Heart right ventricle (tissue), 16 donors: ENCODE measurements at regions of chr3 and their contacts with region 1.

Region 1: GRCh38 chr3:171049861-171050444 is 23.4 kb upstream of the SLC2A2 start:
- DNase-seq: peak; percentile 16 to 27
- ATAC-seq: peak; percentile 56 to 82 (median 64)
- H3K4me3 ChIP-seq: no peak overlapping the region
- H3K27ac ChIP-seq: no peak overlapping the region
- H3K4me1 ChIP-seq: peaks cover 0 to 6% (median 0%) of the 10 kb centered on the region in 9 donors
- H3K27me3 ChIP-seq: no peaks in the 10 kb centered on the region
- CTCF ChIP-seq: peak; percentile 30 to 68 (median 63)

Region 2: DNA sequence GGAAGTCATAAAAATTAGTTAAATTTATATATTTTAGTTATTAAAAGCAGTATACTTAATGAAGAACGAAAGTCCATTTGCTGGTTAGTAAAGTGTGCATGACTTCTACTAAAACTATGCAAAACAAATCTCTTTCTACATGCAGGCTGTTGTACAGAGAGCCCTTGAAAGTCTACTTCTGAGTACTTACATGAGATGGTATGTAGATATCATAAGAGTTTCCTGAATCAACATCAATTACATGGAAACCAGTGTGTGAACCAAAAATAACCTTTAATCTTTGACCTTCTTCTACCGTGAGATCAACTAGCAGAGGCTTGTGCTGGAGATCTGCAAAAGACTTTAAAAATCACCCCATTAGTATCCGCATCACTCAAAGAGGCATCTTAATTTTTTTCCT is 18.7 kb after region 1 on chr3:
- intact Hi-C with region 1: no loop called
- DNase-seq: no peak
- ATAC-seq: no peak
- H3K4me3 ChIP-seq: no peak overlapping the region
- H3K27ac ChIP-seq: no peak overlapping the region
- H3K4me1 ChIP-seq: no peaks in the 10 kb centered on the region
- H3K27me3 ChIP-seq: no peaks in the 10 kb centered on the region
- CTCF ChIP-seq: no peak

Region 3: DNA sequence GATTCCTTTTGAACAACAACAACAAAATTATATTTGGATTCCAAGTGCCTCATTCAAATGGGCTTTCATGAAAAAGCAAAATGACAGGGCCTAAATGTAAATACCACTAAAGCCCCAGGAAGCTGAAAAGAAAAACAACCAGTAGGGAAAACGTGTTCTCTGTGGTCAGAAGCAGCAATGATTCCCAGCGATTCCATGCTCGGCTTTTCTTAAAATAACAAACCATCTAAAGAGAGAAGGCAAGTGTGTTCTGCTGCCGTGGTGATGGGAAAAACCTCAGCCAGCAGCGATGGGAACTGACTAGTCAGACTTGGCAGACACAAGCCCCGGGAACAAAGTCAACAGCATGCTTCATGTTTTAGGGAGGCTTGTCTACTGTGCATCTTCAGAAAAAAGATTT is 256.7 kb after region 1 on chr3:
- intact Hi-C with region 1: loop called in 1 of 10 experiments (anchors 10 kb)
- DNase-seq: peak; percentile 59 to 86
- ATAC-seq: peak; percentile 88 to 94 (median 92)
- H3K4me3 ChIP-seq: peak overlapping the region in 5 of 10 donors; percentile 9 to 23 (median 15)
- H3K27ac ChIP-seq: peak overlapping the region; percentile 47 to 90 (median 74)
- H3K4me1 ChIP-seq: peaks cover 0 to 39% (median 21%) of the 10 kb centered on the region in 9 donors
- H3K27me3 ChIP-seq: no peaks in the 10 kb centered on the region
- CTCF ChIP-seq: no peak